HCT116 (cell line): ENCODE measurements at regions of chr11 and their contacts with region 1.

Region 1: DNA sequence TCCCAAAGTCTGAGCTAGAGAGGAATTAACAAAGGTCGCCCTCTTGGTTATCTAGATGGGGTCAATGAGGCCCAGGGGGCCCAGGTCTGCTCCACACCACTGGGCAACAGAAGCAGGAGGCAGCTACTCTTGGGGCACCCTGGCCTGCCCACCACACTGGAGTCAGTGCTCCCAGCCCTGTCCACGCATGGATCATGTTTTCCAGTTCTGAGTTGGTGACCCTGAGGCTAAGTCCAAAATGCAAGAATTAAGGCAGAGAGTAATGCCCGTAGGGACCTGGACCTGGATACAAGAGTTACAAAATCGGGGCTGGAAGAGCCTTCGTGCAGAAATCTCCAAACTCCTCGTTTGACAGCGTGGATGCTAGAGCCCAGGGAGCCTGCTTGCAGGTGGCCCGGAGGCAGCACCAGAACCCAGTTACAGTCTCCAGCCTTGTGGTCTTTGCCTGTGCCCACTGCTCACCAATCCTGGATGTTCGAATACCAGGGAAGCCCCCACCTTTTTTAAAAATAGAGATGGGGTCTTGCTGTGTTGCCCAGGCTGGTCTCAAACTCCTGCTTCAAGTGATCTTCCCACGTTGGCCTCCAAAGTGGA is 6.1 kb upstream of the THRSP start:
- DNase-seq: no peak
- ATAC-seq: no peak
- H3K4me3 ChIP-seq: no peak overlapping the region
- H3K27ac ChIP-seq: no peak overlapping the region
- H3K4me1 ChIP-seq: no peaks in the 10 kb centered on the region
- H3K27me3 ChIP-seq: no peaks in the 10 kb centered on the region
- CTCF ChIP-seq: no peak
- POLR2A ChIP-seq: no peak
- RAD21 ChIP-seq: no peak

Region 2: DNA sequence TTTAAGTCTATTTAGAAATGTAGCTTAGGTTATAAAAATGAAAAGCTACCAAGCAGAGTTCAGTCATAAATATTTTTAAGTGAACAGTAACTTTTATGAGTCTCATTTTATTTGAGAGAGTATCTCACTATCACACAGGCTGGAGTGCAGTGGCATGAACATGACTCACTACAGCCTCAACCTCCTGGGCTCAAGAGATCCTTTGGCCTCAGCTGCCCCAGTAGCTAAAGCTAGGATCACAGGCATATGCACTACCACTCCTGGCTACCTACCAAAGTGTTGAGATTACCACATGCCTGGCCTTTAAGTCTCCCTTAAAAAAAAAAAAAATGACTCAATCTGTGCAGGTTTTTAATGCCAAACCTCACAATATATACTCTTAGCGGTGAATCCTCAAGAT is 385.3 kb before region 1 on chr11:
- CTCF ChIA-PET with region 1: no interaction called
- POLR2A ChIA-PET with region 1: no interaction called
- RAD21 ChIA-PET with region 1: no interaction called
- intact Hi-C with region 1: no loop called
- DNase-seq: no peak
- ATAC-seq: no peak
- H3K4me3 ChIP-seq: no peak overlapping the region
- H3K27ac ChIP-seq: no peak overlapping the region
- H3K4me1 ChIP-seq: no peaks in the 10 kb centered on the region
- H3K27me3 ChIP-seq: no peaks in the 10 kb centered on the region
- CTCF ChIP-seq: no peak
- POLR2A ChIP-seq: no peak
- RAD21 ChIP-seq: no peak

Region 3: DNA sequence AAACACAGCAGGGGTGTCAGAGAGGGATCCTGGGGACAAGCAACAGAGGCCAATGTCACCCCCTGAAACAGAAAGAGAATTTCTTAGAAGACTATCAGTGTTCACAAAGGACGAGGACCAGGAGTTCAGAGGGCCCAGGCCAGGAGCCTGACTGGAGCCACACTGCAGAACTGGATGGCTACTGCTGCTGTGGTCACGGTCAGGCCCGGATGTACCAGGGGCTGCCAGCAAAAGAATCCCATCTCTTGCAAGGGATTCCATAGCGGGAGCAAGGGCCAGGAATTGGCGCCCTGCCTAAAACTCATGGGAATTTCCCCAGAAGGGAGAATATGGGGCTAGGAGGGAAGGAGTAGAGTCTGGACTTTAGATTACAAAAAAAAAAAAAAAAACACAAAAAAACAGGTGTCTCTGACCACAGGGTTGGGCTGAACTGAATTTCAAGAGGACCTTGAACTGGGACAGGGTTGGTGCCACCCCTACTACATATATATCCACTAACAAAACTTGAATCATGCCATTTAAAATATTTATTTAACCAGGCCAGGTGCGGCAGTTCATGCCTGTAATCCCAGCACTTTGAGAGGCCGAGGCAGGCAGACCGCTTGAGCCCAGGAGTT is 18.8 kb before region 1 on chr11:
- CTCF ChIA-PET with region 1: no interaction called
- POLR2A ChIA-PET with region 1: no interaction called
- RAD21 ChIA-PET with region 1: no interaction called
- intact Hi-C with region 1: no loop called
- DNase-seq: no peak
- ATAC-seq: no peak
- H3K4me3 ChIP-seq: no peak overlapping the region
- H3K27ac ChIP-seq: no peak overlapping the region; the same call in 1 of the 2 replicates
- H3K4me1 ChIP-seq: peaks cover 33 to 52% of the 10 kb centered on the region in 2 experiments
- H3K27me3 ChIP-seq: no peaks in the 10 kb centered on the region
- CTCF ChIP-seq: no peak
- POLR2A ChIP-seq: no peak
- RAD21 ChIP-seq: no peak

Region 4: GRCh38 chr11:78100676-78101456 is 43.3 kb after region 1 on chr11:
- CTCF ChIA-PET with region 1: no interaction called
- POLR2A ChIA-PET with region 1: no interaction called
- RAD21 ChIA-PET with region 1: no interaction called
- intact Hi-C with region 1: loop called (anchors 2 kb)
- DNase-seq: no peak
- ATAC-seq: no peak
- H3K4me3 ChIP-seq: no peak overlapping the region
- H3K27ac ChIP-seq: no peak overlapping the region
- H3K4me1 ChIP-seq: no peaks in the 10 kb centered on the region
- H3K27me3 ChIP-seq: no peaks in the 10 kb centered on the region
- CTCF ChIP-seq: no peak
- POLR2A ChIP-seq: no peak
- RAD21 ChIP-seq: no peak